MCF 10A (cell line): ENCODE measurements at regions of chr1 and their contacts with region 1.

Region 1: GRCh38 chr1:156797212-156797871 is 19.3 kb downstream of the SH2D2A start:
- DNase-seq: peak; percentile 82
- H3K4me3 Mint-ChIP-seq: no peak overlapping the region
- H3K27ac Mint-ChIP-seq: no peak overlapping the region
- H3K4me1 Mint-ChIP-seq: no peaks in the 10 kb centered on the region
- H3K27me3 Mint-ChIP-seq: no peaks in the 10 kb centered on the region
- CTCF ChIP-seq: peak; percentile 93

Region 2: GRCh38 chr1:156591432-156592157 is 205.7 kb before region 1 on chr1 and contains the start of gene NAXE:
- CTCF ChIA-PET with region 1: no interaction called
- POLR2A ChIA-PET with region 1: no interaction called
- intact Hi-C with region 1: no loop called
- DNase-seq: peak; percentile 77
- H3K4me3 Mint-ChIP-seq: peak within 1 kb of the TSS; percentile 77
- H3K27ac Mint-ChIP-seq: peak within 1 kb of the TSS; percentile 65
- H3K4me1 Mint-ChIP-seq: peaks cover 13% of the 10 kb centered on the region
- H3K27me3 Mint-ChIP-seq: no peaks in the 10 kb centered on the region
- CTCF ChIP-seq: no peak
- total RNA-seq, gene NAXE: 141 and 155 TPM in 2 replicates

Region 3: DNA sequence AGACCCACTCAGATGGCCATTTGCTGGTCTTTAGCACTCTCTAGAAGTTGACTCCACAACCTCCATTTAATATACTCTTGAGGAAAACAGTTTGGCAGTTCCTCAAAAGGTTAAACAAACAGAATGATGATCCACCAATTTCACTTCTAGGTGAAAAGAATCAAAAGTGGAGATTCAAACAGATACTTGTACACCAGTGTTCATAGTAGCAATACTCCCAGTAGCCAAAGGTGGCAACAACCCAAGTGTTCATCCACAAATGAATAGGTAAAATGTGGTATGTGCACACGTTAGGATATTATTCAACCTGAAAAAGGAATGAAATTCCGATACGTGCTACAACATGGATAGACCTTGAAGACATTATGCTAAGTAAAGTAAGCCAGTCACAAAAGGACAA is 23.7 kb before region 1 on chr1:
- CTCF ChIA-PET with region 1: interaction called, 22 read pairs
- POLR2A ChIA-PET with region 1: interaction called, 3 read pairs
- intact Hi-C with region 1: no loop called
- DNase-seq: no peak
- H3K4me3 Mint-ChIP-seq: no peak overlapping the region
- H3K27ac Mint-ChIP-seq: no peak overlapping the region
- H3K4me1 Mint-ChIP-seq: peaks cover 65% of the 10 kb centered on the region
- H3K27me3 Mint-ChIP-seq: no peaks in the 10 kb centered on the region
- CTCF ChIP-seq: no peak

Region 4: DNA sequence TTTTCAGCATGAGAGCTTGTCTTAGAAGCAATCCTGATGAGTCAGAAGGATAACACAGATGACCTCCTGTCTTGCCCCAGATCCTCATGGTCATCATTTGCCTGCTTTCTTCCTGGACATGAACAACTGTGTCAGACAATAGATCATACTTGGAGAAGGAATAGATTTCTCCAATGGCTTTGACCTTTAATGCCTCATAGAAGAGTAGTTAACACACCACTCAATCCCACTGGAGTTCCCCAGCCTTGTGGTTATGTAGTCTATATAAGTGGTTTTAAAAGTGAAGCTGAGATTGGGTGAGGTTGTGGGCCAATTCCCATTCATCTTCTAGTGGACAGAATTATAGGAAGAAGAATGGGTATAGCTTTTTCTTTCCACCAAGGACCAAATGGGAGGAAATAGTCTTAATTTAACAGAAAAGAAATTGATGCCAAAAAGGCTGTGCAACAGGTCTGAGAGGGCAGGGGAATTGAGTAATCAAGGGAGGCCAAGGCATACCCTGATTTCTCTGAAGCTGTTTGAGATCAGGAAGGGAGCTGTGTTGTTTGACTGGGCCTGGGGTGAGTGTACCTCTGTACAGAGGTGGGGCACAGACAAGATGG is 15.7 kb before region 1 on chr1:
- CTCF ChIA-PET with region 1: interaction called, 28 read pairs
- POLR2A ChIA-PET with region 1: interaction called, 3 read pairs
- intact Hi-C with region 1: no loop called
- DNase-seq: no peak
- H3K4me3 Mint-ChIP-seq: no peak overlapping the region
- H3K27ac Mint-ChIP-seq: peak overlapping the region; percentile 66
- H3K4me1 Mint-ChIP-seq: peaks cover 28% of the 10 kb centered on the region
- H3K27me3 Mint-ChIP-seq: no peaks in the 10 kb centered on the region
- CTCF ChIP-seq: no peak

Region 5: DNA sequence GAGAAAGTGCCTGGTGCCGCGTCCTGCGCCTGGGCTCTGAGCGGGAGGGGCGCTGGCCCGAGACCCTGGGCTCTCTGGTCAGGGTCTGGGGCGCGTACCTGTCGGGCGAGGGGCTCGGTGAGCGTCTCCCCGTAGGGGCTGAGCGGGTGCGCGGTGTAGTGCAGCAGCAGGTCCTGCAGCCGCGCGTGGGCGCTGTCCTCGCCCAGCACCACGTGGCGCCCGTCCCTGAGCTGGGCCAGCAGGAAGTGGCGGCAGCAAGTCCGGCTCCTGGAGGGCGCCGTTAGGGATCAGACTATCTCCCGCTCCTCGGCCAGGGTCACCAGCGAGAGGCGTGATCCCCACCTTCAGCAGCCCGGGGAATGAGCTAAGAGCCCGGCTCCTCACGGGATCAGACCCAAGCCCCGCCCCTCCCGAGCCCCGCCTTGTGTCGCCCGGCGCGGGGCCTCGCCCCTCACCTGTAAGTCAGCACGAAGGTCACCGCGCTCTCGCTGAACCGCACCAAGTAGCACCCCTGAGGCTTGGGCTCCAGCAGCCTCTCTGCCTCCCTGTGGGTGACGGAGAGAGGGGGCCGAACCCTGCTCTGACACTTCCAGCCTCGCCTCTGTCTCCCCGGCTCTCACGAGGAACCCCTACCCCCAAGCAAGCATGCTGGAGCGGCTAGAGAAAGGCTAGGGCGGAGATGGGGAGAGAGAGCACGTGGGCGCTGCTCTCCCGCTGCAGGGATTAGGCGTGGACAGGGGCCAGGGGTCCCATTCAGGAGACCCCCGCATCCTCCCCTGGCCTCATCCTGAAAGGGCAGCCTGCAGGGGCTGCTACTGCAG is 16.6 kb after region 1 on chr1:
- CTCF ChIA-PET with region 1: interaction called, 114 read pairs
- POLR2A ChIA-PET with region 1: interaction called, 3 read pairs
- intact Hi-C with region 1: no loop called
- DNase-seq: peak; percentile 65
- H3K4me3 Mint-ChIP-seq: peak overlapping the region; percentile 73
- H3K27ac Mint-ChIP-seq: peak overlapping the region; percentile 27
- H3K4me1 Mint-ChIP-seq: peaks cover 48% of the 10 kb centered on the region
- H3K27me3 Mint-ChIP-seq: no peaks in the 10 kb centered on the region
- CTCF ChIP-seq: peak; percentile 55

Region 6: DNA sequence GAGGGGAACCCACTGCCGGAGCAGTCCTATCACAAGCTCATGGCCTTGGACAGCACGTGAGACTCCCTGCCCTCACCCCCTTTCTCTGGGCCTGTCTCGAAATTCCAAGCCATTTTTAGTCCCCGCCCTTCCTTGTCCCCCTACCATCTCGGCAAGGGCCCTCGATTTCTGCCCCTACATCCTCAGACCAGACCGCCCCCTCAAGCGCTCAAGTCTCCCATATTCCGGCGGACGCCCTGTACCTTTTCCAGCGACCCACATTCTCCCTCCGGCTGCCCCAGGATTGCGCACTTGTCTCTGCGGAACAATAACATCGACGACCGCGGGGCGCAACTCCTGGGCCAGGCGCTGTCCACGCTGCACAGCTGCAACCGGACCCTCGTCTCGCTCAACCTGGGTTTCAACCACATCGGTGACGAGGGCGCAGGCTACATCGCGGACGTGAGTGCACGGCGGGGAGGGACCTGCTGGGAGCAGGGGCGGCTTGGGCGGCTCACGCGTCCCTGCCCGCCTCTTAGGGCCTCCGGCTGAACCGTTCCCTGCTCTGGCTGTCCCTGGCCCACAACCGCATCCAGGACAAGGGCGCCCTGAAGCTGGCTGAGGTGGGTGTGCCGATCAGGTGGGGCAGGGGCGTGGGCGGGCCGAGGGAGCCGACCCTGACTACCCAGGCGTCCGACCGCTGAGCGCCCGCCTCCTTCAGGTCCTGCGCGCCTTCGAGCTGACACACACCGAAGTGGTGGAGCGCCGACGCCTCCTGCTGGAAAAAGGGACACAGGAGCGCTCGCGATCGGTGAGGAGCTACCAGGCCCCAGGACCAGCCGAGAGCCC is 130.1 kb after region 1 on chr1:
- CTCF ChIA-PET with region 1: interaction called, 80 read pairs
- POLR2A ChIA-PET with region 1: interaction called, 3 read pairs
- intact Hi-C with region 1: loop called (anchors 2 kb)
- DNase-seq: peak; percentile 91
- H3K4me3 Mint-ChIP-seq: peak overlapping the region; percentile 41
- H3K27ac Mint-ChIP-seq: no peak overlapping the region
- H3K4me1 Mint-ChIP-seq: peaks cover 33% of the 10 kb centered on the region
- H3K27me3 Mint-ChIP-seq: peaks cover 58% of the 10 kb centered on the region
- CTCF ChIP-seq: peak; percentile 97